ENCODE measurements at regions of chr3 and their contacts with region 1.

Region 1: GRCh38 chr3:79521238-79521848 is 246.5 kb downstream of the ROBO1 start:
- DNase-seq: peak; percentile 63
- H3K4me3 Mint-ChIP-seq: no peak overlapping the region
- H3K27ac Mint-ChIP-seq: no peak overlapping the region
- H3K4me1 Mint-ChIP-seq: no peaks in the 10 kb centered on the region
- H3K27me3 Mint-ChIP-seq: peaks cover 79% of the 10 kb centered on the region
- CTCF ChIP-seq: peak; percentile 54

Region 2: GRCh38 chr3:79497447-79498111 is 23.8 kb before region 1 on chr3:
- CTCF ChIA-PET with region 1: interaction called, 14 read pairs
- POLR2A ChIA-PET with region 1: no interaction called
- intact Hi-C with region 1: no loop called
- DNase-seq: peak; percentile 28
- H3K4me3 Mint-ChIP-seq: no peak overlapping the region
- H3K27ac Mint-ChIP-seq: no peak overlapping the region
- H3K4me1 Mint-ChIP-seq: no peaks in the 10 kb centered on the region
- H3K27me3 Mint-ChIP-seq: peaks cover 20% of the 10 kb centered on the region
- CTCF ChIP-seq: peak; percentile 47

Region 3: GRCh38 chr3:79534727-79535126 is 13.4 kb after region 1 on chr3:
- CTCF ChIA-PET with region 1: interaction called, 13 read pairs
- POLR2A ChIA-PET with region 1: no interaction called
- intact Hi-C with region 1: no loop called
- DNase-seq: no peak
- H3K4me3 Mint-ChIP-seq: no peak overlapping the region
- H3K27ac Mint-ChIP-seq: no peak overlapping the region
- H3K4me1 Mint-ChIP-seq: no peaks in the 10 kb centered on the region
- H3K27me3 Mint-ChIP-seq: peaks cover 68% of the 10 kb centered on the region
- CTCF ChIP-seq: no peak

Region 4: GRCh38 chr3:79587150-79587549 is 65.8 kb after region 1 on chr3:
- CTCF ChIA-PET with region 1: no interaction called
- POLR2A ChIA-PET with region 1: no interaction called
- intact Hi-C with region 1: loop called (anchors 10 kb)
- DNase-seq: no peak
- H3K4me3 Mint-ChIP-seq: no peak overlapping the region
- H3K27ac Mint-ChIP-seq: no peak overlapping the region
- H3K4me1 Mint-ChIP-seq: no peaks in the 10 kb centered on the region
- H3K27me3 Mint-ChIP-seq: peaks cover 37% of the 10 kb centered on the region
- CTCF ChIP-seq: no peak

Region 5: GRCh38 chr3:79751703-79752102 is 230.4 kb after region 1 on chr3:
- CTCF ChIA-PET with region 1: no interaction called
- POLR2A ChIA-PET with region 1: no interaction called
- intact Hi-C with region 1: no loop called
- DNase-seq: no peak
- H3K4me3 Mint-ChIP-seq: no peak overlapping the region
- H3K27ac Mint-ChIP-seq: no peak overlapping the region
- H3K4me1 Mint-ChIP-seq: no peaks in the 10 kb centered on the region
- H3K27me3 Mint-ChIP-seq: no peaks in the 10 kb centered on the region
- CTCF ChIP-seq: no peak

Region 6: DNA sequence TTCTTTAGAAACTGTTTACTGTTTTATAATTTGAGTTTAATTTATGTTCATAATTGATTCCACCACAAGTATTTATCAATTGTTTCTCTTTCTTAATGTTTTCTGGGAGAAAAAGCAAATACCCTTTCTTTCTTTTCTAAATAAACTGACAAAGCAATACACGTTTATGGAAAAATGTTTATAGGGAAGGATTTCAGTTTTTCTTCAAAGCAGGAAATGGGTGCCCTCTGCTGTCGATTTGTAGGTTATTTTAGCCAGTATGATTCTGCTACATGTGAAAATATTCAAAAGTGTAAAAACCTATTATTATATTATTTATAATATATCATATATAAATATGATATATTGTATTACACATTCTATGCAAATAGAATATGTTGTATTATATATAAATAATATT is 1167.5 kb after region 1 on chr3:
- CTCF ChIA-PET with region 1: interaction called, 10 read pairs
- POLR2A ChIA-PET with region 1: no interaction called
- intact Hi-C with region 1: loop called (anchors 1 kb)
- DNase-seq: peak; percentile 34
- H3K4me3 Mint-ChIP-seq: no peak overlapping the region
- H3K27ac Mint-ChIP-seq: no peak overlapping the region
- H3K4me1 Mint-ChIP-seq: no peaks in the 10 kb centered on the region
- H3K27me3 Mint-ChIP-seq: peaks cover 11% of the 10 kb centered on the region
- CTCF ChIP-seq: peak; percentile 45

Region 7: DNA sequence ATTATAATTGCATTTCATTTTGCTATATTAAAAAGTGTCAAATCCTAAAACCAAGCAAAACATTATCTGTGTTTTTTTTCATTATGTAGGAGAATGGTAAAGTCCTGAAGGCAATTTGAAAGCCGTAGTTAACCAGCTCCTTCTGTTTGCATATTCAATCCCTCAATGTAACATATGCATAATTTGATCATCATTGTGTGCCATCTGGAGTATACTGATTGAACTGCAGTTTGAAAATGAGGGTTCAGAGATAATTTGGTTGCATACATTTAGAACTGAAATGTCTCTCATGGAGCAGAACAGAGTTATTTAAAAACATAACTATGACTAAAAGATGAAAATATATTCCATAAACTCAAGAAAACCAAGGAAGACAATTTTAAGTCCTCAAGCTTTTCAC is 1721.5 kb after region 1 on chr3:
- CTCF ChIA-PET with region 1: interaction called, 7 read pairs
- POLR2A ChIA-PET with region 1: no interaction called
- intact Hi-C with region 1: loop called (anchors 1 kb)
- DNase-seq: peak; percentile 52
- H3K4me3 Mint-ChIP-seq: no peak overlapping the region
- H3K27ac Mint-ChIP-seq: no peak overlapping the region
- H3K4me1 Mint-ChIP-seq: no peaks in the 10 kb centered on the region
- H3K27me3 Mint-ChIP-seq: peaks cover 65% of the 10 kb centered on the region
- CTCF ChIP-seq: peak; percentile 46

Region 8: DNA sequence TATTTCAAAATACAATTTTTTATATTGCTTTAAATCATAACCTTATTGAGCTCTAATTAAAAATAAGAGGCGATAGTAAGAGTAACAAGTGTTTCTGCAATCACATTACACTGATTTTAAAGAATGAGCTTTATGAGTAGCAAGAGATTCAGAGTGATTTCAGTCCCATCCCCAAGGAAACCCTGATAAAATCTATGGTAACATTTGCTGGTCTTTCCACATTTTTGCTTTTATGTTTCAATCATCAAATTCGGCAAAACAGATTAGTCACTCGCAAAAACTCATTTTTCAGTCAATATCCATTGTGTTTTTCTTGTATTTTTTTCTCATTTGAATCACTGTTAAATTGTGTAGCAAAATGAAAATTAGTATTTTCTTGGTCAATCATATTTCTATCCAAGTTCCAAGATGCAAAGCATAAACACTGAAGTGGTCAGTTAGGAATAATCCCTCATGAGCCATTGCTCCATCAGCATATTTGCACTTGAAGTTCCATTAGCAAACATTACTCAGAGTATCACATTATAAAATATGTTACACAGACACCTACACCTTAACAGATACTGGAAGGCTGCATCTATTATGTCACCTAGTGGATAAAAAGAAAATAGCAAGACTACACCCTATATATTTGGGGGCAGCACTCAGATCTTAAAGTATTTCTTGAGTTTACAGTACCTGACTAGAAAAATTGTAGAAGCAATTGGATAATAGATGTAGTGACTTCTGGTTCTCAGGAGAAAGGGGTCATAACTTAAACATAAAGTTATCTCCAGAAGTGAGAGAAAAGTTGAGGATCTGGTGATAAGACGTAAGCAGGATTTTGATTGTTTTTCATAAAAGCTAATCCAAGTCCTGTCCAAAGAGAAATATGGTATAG is 1817.6 kb after region 1 on chr3:
- CTCF ChIA-PET with region 1: no interaction called
- POLR2A ChIA-PET with region 1: no interaction called
- intact Hi-C with region 1: loop called (anchors 5 kb)
- DNase-seq: peak; percentile 37
- H3K4me3 Mint-ChIP-seq: no peak overlapping the region
- H3K27ac Mint-ChIP-seq: no peak overlapping the region
- H3K4me1 Mint-ChIP-seq: no peaks in the 10 kb centered on the region
- H3K27me3 Mint-ChIP-seq: peaks cover 29% of the 10 kb centered on the region
- CTCF ChIP-seq: peak; percentile 40